ENCODE measurements at regions of chrX and their contacts with region 1.

Region 1: DNA sequence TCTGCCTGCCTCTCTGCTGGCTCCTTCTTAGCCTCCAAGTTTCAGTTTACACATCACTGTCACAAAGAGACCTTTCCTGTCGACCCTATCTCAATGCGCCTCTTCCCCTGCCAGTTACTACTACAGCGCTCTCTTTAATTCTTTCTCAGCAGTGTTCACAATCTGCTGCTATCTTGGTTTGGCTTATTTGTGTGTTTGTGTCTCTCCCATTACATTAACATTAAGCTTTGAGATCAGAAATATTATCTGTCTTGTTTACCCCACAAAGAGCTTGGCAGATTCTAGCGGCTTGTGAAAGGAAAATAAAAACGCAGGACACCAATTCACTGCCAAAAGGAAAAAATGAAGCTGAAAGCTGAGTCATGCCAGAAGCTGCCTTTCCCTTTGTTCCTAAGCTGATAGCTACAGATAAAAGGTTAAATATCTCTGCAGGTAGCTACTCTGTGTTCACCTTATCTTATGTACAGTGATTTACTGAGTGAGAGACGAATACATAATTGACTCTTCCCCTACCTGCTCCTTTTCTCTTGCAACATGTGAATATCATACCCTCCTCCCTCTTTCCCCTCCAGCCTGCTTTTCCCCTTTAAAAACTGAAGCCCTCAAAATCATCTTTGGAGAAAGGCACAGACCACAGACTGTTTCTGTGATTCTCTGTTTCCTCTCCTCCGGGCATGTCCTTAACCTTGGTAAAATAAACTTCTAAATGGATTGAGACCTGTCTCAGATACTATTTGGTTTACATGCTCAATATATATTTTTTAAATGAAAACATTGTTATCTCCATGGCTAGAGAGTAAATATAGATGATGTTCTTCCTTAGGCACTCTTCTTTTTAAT is 19.3 kb upstream of the SLC9A7 start:
- DNase-seq: no peak

Region 2: GRCh38 chrX:47637546-47638195 is 859.5 kb after region 1 on chrX:
- intact Hi-C with region 1: loop called in 1 of 2 experiments (anchors 5 kb)
- DNase-seq: no peak